Dendritic cell treated with granulocyte-macrophage colony-stimulating factor and Interleukin-4, amounts not matched to agents 40 ng/mL and 50 ng/mL, for 4 days (primary cell): ENCODE measurements at regions of chr19 and their contacts with region 1.

Region 1: GRCh38 chr19:51393959-51394836 is 3.8 kb upstream of the C19orf84 start:
- H3K4me3 Mint-ChIP-seq: peak overlapping the region; percentile 67
- H3K27ac Mint-ChIP-seq: peak overlapping the region; percentile 73
- H3K4me1 Mint-ChIP-seq: peaks cover 24% of the 10 kb centered on the region
- H3K27me3 Mint-ChIP-seq: no peaks in the 10 kb centered on the region

Region 2: DNA sequence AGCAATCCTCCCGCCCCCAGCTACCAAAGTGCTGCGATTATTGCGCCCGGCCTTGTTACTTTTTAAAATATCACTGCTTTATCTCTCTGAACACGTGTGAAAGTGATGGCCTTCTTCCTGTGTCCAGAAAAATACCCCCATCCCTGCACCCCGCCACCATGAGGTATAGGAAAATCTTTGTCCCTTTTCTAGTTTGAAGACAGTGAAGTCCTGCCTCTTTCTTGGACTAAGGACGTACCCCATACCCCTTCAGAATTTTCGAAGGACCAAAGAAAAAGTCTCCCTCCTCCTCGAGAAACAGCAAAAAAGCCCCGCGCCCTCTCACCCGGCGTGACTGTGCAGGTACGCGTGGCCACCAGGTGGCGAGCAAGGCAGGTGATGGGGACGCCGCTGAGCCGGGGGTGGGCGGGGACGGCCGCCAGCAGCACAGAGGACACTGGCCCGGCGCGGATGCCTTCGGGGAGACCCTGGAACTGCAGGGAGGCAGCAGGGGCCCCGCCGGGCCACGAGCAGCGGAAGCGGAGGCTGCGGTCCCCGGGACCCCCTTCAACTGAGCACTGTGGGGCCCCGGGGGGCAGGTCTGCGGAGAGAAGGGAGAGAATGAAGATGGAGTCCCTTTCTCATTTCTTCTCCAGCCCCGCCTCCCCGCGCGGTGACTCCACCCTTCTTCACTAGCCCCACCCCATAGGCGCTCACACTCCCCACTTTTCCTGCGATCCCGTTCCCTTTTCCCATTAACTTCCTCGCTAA is 55.5 kb before region 1 on chr19:
- intact Hi-C with region 1: loop called (anchors 2 kb)
- H3K4me3 Mint-ChIP-seq: peak overlapping the region; percentile 89
- H3K27ac Mint-ChIP-seq: peak overlapping the region; percentile 88
- H3K4me1 Mint-ChIP-seq: peaks cover 38% of the 10 kb centered on the region
- H3K27me3 Mint-ChIP-seq: peaks cover 29% of the 10 kb centered on the region

Region 3: DNA sequence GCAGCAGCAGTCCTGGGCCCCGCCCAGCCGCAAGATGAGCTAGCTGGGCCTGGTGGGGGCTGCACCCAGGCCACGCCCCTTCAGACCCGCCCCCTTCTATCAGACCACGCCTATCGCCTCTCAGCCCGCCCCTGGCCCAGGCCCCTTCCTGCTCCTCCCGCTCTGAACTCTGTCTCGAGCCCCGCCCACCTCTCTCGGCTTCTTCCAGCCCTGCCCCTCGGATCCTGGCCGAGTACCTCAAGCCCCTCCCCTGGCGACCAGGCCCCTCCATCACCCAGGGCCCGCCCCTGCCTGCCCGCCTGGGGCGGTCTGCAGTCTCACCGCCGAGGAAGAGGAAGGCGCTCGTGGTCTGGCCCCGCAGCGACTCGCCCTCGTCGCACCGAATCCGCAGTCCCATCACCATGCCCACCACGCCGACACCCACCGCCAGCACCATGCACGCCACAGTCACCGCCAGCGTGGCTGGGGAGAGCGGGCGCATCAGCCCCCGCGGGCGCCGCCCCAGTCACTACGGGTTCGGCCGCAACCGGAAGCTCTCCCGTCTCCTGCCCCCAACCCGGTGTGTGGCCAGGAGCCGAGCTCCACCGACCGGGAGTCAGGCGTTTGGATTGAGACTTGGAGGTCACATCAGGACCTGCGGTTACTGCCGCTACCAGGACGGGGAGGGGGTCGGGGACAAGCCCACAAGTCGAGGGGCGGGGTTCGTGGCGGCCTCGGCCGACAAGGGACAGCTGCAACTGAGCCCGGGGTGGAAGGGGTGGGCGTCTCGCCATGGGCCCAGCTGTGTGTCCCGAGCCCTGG is 26.4 kb before region 1 on chr19:
- intact Hi-C with region 1: loop called (anchors 1 kb)
- H3K4me3 Mint-ChIP-seq: peak overlapping the region; percentile 77
- H3K27ac Mint-ChIP-seq: peak overlapping the region; percentile 85
- H3K4me1 Mint-ChIP-seq: peaks cover 68% of the 10 kb centered on the region
- H3K27me3 Mint-ChIP-seq: no peaks in the 10 kb centered on the region

Region 4: DNA sequence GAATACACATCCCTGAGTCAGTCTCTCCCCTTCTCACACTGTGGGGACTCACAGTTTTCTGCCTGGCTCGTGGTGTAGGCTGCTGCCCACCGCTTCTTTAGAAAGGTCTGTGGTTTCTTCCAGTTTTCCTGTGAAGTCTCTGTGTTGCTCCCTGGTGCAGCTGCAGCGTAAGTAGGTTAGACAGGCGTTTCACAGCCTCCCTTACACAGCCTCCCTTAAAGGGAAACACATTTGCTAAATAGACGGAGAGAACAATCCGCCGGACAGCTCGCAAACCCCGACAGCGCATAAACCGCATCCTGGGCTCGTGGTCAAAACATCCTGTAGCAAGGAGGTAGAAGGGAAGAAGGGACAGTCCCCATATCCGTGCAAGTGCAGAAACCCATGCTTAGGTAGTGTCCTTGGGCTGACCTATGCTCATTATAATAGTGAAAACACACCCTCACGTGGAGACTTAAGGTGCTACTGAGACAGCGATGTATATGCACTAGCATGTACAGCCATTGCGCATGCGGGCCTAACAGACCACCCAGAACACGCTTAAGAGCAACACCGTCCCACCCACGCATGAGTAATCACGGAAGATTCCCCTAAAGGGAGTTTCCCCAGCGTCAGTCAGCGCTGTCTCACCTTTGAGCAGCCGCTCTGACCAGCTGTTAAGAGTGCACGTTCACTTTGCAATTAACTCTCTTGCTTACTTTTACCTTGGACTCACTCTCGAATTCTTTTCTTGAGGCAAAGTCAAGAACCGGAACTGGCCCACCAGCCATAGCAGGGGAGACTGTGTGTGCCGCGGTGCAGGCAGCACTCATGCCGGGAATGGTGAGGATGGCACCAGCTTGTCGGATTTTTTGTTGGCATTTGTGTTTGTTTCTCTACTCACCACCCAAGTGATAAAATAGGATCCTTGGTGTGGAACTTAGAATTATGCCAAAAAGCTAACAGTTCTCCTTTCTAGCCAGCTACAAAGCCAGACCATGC is 47.5 kb after region 1 on chr19:
- intact Hi-C with region 1: loop called (anchors 1 kb)
- H3K4me3 Mint-ChIP-seq: peak overlapping the region; percentile 69
- H3K27ac Mint-ChIP-seq: peak overlapping the region; percentile 79
- H3K4me1 Mint-ChIP-seq: peaks cover 44% of the 10 kb centered on the region
- H3K27me3 Mint-ChIP-seq: peaks cover 36% of the 10 kb centered on the region

Region 5: DNA sequence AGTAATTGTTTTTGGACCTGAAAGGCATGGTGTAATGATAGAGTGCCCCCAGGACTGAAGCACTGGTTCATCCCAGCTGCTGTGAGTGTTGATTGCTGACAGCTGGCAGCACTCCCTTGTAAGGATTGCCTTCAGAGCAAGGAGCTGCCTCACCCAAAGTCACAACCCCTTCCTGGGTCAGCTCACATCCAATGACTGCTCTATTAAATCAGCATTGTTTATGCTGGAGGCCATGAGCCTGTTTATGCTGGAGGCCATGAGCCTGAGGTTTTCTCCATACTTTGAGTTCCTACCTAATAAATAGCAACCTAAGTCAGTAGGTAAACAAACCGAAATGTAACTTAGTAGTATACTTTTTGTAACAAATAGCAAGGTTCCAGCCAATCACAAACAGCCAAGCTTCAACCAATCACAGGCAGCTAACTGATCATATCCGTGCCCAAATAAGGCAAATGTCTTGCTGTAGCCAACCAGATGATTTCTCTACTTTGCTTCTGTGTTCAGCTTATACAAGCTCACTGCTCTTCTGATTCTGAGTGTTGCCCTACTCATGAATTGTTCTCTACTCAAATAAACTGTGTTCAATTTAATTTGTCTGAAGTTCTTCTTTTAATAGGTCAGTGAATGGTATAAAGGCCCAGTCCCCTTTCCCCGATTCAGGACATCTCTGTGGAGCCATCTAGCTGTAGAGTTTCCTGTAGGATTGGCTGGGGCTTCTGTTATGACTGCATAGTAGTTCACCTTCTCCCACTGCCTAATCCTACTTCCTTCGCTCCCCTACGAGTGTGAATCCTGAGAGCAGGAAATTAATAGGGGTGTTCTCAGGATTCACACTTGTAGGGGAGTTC is 287.3 kb after region 1 on chr19:
- intact Hi-C with region 1: no loop called
- H3K4me3 Mint-ChIP-seq: no peak overlapping the region
- H3K27ac Mint-ChIP-seq: no peak overlapping the region
- H3K4me1 Mint-ChIP-seq: no peaks in the 10 kb centered on the region
- H3K27me3 Mint-ChIP-seq: peaks cover 78% of the 10 kb centered on the region